Activated B cell treated with CpG ODN at 0.5 μM for 24 hours (primary cell): ENCODE measurements at regions of chr3 and their contacts with region 1.

Region 1: GRCh38 chr3:45612918-45613602 is 18.5 kb downstream of the LIMD1 start:
- DNase-seq: no peak
- ATAC-seq: peak; percentile 76
- H3K4me3 Mint-ChIP-seq: peak overlapping the region; percentile 70
- H3K27ac Mint-ChIP-seq: peak overlapping the region; percentile 68
- H3K4me1 Mint-ChIP-seq: peaks cover 86% of the 10 kb centered on the region
- H3K27me3 Mint-ChIP-seq: no peaks in the 10 kb centered on the region
- CTCF ChIP-seq: no peak

Region 2: GRCh38 chr3:45555086-45555591 is 57.9 kb before region 1 on chr3:
- CTCF ChIA-PET with region 1: no interaction called
- POLR2A ChIA-PET with region 1: no interaction called
- intact Hi-C with region 1: no loop called
- DNase-seq: no peak
- ATAC-seq: no peak
- H3K4me3 Mint-ChIP-seq: no peak overlapping the region
- H3K27ac Mint-ChIP-seq: no peak overlapping the region
- H3K4me1 Mint-ChIP-seq: peaks cover 22% of the 10 kb centered on the region
- H3K27me3 Mint-ChIP-seq: no peaks in the 10 kb centered on the region
- CTCF ChIP-seq: no peak

Region 3: GRCh38 chr3:45567730-45568172 is 45.3 kb before region 1 on chr3:
- CTCF ChIA-PET with region 1: no interaction called
- POLR2A ChIA-PET with region 1: no interaction called
- intact Hi-C with region 1: loop called (anchors 5 kb)
- DNase-seq: peak; percentile 21
- ATAC-seq: peak; percentile 61
- H3K4me3 Mint-ChIP-seq: peak overlapping the region; percentile 45
- H3K27ac Mint-ChIP-seq: peak overlapping the region; percentile 80
- H3K4me1 Mint-ChIP-seq: peaks cover 55% of the 10 kb centered on the region
- H3K27me3 Mint-ChIP-seq: no peaks in the 10 kb centered on the region
- CTCF ChIP-seq: no peak

Region 4: GRCh38 chr3:46154311-46154710 is 541.3 kb after region 1 on chr3:
- CTCF ChIA-PET with region 1: no interaction called
- POLR2A ChIA-PET with region 1: no interaction called
- intact Hi-C with region 1: no loop called
- DNase-seq: no peak
- ATAC-seq: no peak
- H3K4me3 Mint-ChIP-seq: no peak overlapping the region
- H3K27ac Mint-ChIP-seq: no peak overlapping the region
- H3K4me1 Mint-ChIP-seq: peaks cover 5% of the 10 kb centered on the region
- H3K27me3 Mint-ChIP-seq: no peaks in the 10 kb centered on the region
- CTCF ChIP-seq: no peak